Activated CD4-positive, alpha-beta T cell treated with anti-CD3 and anti-CD28 coated beads for 36 hours (primary cell): ENCODE measurements at regions of chr19 and their contacts with region 1.

Region 1: GRCh38 chr19:13748169-13748828 is 16.0 kb upstream of the MRI1 start:
- DNase-seq: peak; percentile 50
- ATAC-seq: peak; percentile 2
- H3K4me3 Mint-ChIP-seq: peak overlapping the region; percentile 80
- H3K27ac Mint-ChIP-seq: peak overlapping the region; percentile 84
- H3K4me1 Mint-ChIP-seq: peaks cover 30% of the 10 kb centered on the region
- H3K27me3 Mint-ChIP-seq: no peaks in the 10 kb centered on the region

Region 2: GRCh38 chr19:13731147-13731964 is 16.9 kb before region 1 on chr19:
- CTCF ChIA-PET with region 1: interaction called, 4 read pairs
- POLR2A ChIA-PET with region 1: interaction called, 11 read pairs
- intact Hi-C with region 1: loop called (anchors 1 kb)
- DNase-seq: peak; percentile 97
- ATAC-seq: peak; percentile 99
- H3K4me3 Mint-ChIP-seq: peak overlapping the region; percentile 87
- H3K27ac Mint-ChIP-seq: peak overlapping the region; percentile 94
- H3K4me1 Mint-ChIP-seq: peaks cover 25% of the 10 kb centered on the region
- H3K27me3 Mint-ChIP-seq: no peaks in the 10 kb centered on the region

Region 3: GRCh38 chr19:13764101-13764807 is 16.0 kb after region 1 on chr19 and contains the start of gene MRI1:
- CTCF ChIA-PET with region 1: interaction called, 3 read pairs
- POLR2A ChIA-PET with region 1: interaction called, 6 read pairs
- intact Hi-C with region 1: loop called in 1 of 2 experiments (anchors 1 kb)
- DNase-seq: peak; percentile 77
- ATAC-seq: peak; percentile 86
- H3K4me3 Mint-ChIP-seq: peak within 1 kb of the TSS; percentile 90
- H3K27ac Mint-ChIP-seq: peak within 1 kb of the TSS; percentile 90
- H3K4me1 Mint-ChIP-seq: peaks cover 16% of the 10 kb centered on the region
- H3K27me3 Mint-ChIP-seq: no peaks in the 10 kb centered on the region
- total RNA-seq, gene MRI1: 35.9 to 39.9 TPM

Region 4: GRCh38 chr19:13794757-13795589 is 46.7 kb after region 1 on chr19 and contains the start of gene ZSWIM4:
- CTCF ChIA-PET with region 1: no interaction called
- POLR2A ChIA-PET with region 1: no interaction called
- intact Hi-C with region 1: loop called (anchors 1 kb)
- DNase-seq: peak; percentile 98
- ATAC-seq: peak; percentile 99
- H3K4me3 Mint-ChIP-seq: peak within 1 kb of the TSS; percentile 96
- H3K27ac Mint-ChIP-seq: peak within 1 kb of the TSS; percentile 94
- H3K4me1 Mint-ChIP-seq: peaks cover 24% of the 10 kb centered on the region
- H3K27me3 Mint-ChIP-seq: no peaks in the 10 kb centered on the region
- total RNA-seq, gene ZSWIM4: 5.6 to 5.8 TPM

Region 5: DNA sequence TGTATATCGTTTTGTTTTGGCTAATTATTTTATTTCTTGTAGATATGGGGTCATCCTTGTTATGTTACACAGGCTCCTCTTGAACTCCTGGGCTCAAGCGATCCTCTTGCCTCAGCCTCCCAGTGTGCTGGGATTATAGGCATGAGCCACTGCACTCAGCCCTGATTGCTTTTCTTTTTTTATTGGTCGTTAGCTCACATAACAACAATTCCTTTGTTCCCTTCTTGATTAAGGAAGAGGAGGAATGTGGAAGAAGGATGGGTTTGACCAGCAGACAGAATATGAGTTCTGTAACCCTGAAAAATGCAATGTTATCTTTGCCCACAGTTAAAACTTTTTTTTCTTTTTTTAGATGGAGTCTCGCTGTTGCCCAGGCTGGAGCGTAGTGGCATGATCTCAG is 146.3 kb after region 1 on chr19:
- CTCF ChIA-PET with region 1: no interaction called
- POLR2A ChIA-PET with region 1: no interaction called
- intact Hi-C with region 1: no loop called
- DNase-seq: no peak
- ATAC-seq: no peak
- H3K4me3 Mint-ChIP-seq: no peak overlapping the region
- H3K27ac Mint-ChIP-seq: no peak overlapping the region
- H3K4me1 Mint-ChIP-seq: no peaks in the 10 kb centered on the region
- H3K27me3 Mint-ChIP-seq: no peaks in the 10 kb centered on the region

Region 6: GRCh38 chr19:13905938-13906904 is 157.9 kb after region 1 on chr19 and contains the starts of genes BRME1 and CC2D1A:
- CTCF ChIA-PET with region 1: no interaction called
- POLR2A ChIA-PET with region 1: no interaction called
- intact Hi-C with region 1: loop called in 1 of 2 experiments (anchors 1 kb)
- DNase-seq: peak; percentile 99
- ATAC-seq: peak; percentile 97
- H3K4me3 Mint-ChIP-seq: peak within 1 kb of the TSS; percentile 75
- H3K27ac Mint-ChIP-seq: peak within 1 kb of the TSS; percentile 93
- H3K4me1 Mint-ChIP-seq: peaks cover 14% of the 10 kb centered on the region
- H3K27me3 Mint-ChIP-seq: no peaks in the 10 kb centered on the region
- total RNA-seq, gene BRME1: 5.3 to 5.5 TPM
- total RNA-seq, gene CC2D1A: 30.2 to 34.3 TPM

Region 7: GRCh38 chr19:14081325-14082093 is 333.2 kb after region 1 on chr19:
- CTCF ChIA-PET with region 1: interaction called, 4 read pairs
- POLR2A ChIA-PET with region 1: no interaction called
- intact Hi-C with region 1: loop called in 1 of 2 experiments (anchors 1 kb)
- DNase-seq: peak; percentile 99
- ATAC-seq: peak; percentile 95
- H3K4me3 Mint-ChIP-seq: peak overlapping the region; percentile 90
- H3K27ac Mint-ChIP-seq: peak overlapping the region; percentile 92
- H3K4me1 Mint-ChIP-seq: peaks cover 10% of the 10 kb centered on the region
- H3K27me3 Mint-ChIP-seq: no peaks in the 10 kb centered on the region